Activated CD4-positive, alpha-beta T cell treated with anti-CD3 and anti-CD28 coated beads for 36 hours (primary cell): ENCODE measurements at regions of chr12 and their contacts with region 1.

Region 1: DNA sequence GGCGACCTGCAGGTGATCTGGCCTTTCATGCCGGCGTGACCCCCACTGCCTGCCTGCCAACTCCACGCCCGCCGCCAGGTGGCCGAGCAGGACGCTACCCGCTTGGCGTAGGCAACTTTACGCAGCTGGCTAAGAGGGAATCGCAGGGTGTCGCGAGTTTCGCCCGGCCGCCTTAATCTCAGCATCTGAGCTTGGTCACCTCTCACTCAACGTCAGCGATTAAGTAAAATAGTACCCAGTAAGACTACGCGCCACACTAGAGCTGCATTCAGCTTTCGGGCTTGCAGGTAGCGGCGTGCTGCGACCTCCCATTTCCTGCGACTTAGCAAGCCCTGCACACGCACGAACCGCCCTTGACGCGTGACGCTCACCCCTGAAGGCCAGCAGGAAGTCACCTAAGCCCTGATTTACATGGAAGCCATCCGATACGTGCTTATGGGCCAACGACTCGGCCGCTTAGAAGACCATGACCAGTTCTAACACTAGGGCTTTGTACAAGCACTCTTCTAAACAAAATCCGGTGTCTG is 33.2 kb downstream of the WBP11 start:
- DNase-seq: peak; percentile 94
- ATAC-seq: peak; percentile 45
- H3K4me3 Mint-ChIP-seq: peak overlapping the region; percentile 97
- H3K27ac Mint-ChIP-seq: peak overlapping the region; percentile 99
- H3K4me1 Mint-ChIP-seq: peaks cover 35% of the 10 kb centered on the region
- H3K27me3 Mint-ChIP-seq: no peaks in the 10 kb centered on the region

Region 2: GRCh38 chr12:12999959-13000615 is 1769.9 kb before region 1 on chr12 and contains the start of gene HEBP1:
- CTCF ChIA-PET with region 1: no interaction called
- POLR2A ChIA-PET with region 1: no interaction called
- intact Hi-C with region 1: loop called in 1 of 2 experiments (anchors 5 kb)
- DNase-seq: peak; percentile 99
- ATAC-seq: peak; percentile 92
- H3K4me3 Mint-ChIP-seq: peak within 1 kb of the TSS; percentile 86
- H3K27ac Mint-ChIP-seq: peak within 1 kb of the TSS; percentile 75
- H3K4me1 Mint-ChIP-seq: peaks cover 28% of the 10 kb centered on the region
- H3K27me3 Mint-ChIP-seq: peaks cover 6% of the 10 kb centered on the region
- total RNA-seq, gene HEBP1: 23.5 to 28.6 TPM

Region 3: GRCh38 chr12:14365294-14366208 is 404.5 kb before region 1 on chr12 and contains the start of gene ATF7IP:
- CTCF ChIA-PET with region 1: interaction called, 3 read pairs
- POLR2A ChIA-PET with region 1: interaction called, 8 read pairs
- intact Hi-C with region 1: loop called (anchors 1 to 5 kb)
- DNase-seq: peak; percentile 97
- ATAC-seq: peak; percentile 85
- H3K4me3 Mint-ChIP-seq: peak within 1 kb of the TSS; percentile 76
- H3K27ac Mint-ChIP-seq: peak within 1 kb of the TSS; percentile 98
- H3K4me1 Mint-ChIP-seq: peaks cover 33% of the 10 kb centered on the region
- H3K27me3 Mint-ChIP-seq: no peaks in the 10 kb centered on the region
- total RNA-seq, gene ATF7IP: 81.3 to 101 TPM

Region 4: GRCh38 chr12:14723763-14724162 is 46.3 kb before region 1 on chr12:
- CTCF ChIA-PET with region 1: interaction called, 6 read pairs
- POLR2A ChIA-PET with region 1: no interaction called
- intact Hi-C with region 1: loop called in 1 of 2 experiments (anchors 5 kb)
- DNase-seq: peak; percentile 72
- ATAC-seq: peak; percentile 80
- H3K4me3 Mint-ChIP-seq: no peak overlapping the region
- H3K27ac Mint-ChIP-seq: no peak overlapping the region
- H3K4me1 Mint-ChIP-seq: no peaks in the 10 kb centered on the region
- H3K27me3 Mint-ChIP-seq: peaks cover 5% of the 10 kb centered on the region

Region 5: GRCh38 chr12:14824012-14824634 is 54.1 kb after region 1 on chr12:
- CTCF ChIA-PET with region 1: interaction called, 3 read pairs
- POLR2A ChIA-PET with region 1: no interaction called
- intact Hi-C with region 1: loop called in 1 of 2 experiments (anchors 2 kb)
- DNase-seq: no peak
- ATAC-seq: peak; percentile 90
- H3K4me3 Mint-ChIP-seq: no peak overlapping the region
- H3K27ac Mint-ChIP-seq: no peak overlapping the region
- H3K4me1 Mint-ChIP-seq: peaks cover 23% of the 10 kb centered on the region
- H3K27me3 Mint-ChIP-seq: no peaks in the 10 kb centered on the region

Region 6: GRCh38 chr12:14960548-14961465 is 190.8 kb after region 1 on chr12:
- CTCF ChIA-PET with region 1: interaction called, 3 read pairs
- POLR2A ChIA-PET with region 1: interaction called, 6 read pairs
- intact Hi-C with region 1: loop called (anchors 1 kb)
- DNase-seq: peak; percentile 56
- ATAC-seq: peak; percentile 53
- H3K4me3 Mint-ChIP-seq: peak overlapping the region; percentile 96
- H3K27ac Mint-ChIP-seq: peak overlapping the region; percentile 99
- H3K4me1 Mint-ChIP-seq: peaks cover 55% of the 10 kb centered on the region
- H3K27me3 Mint-ChIP-seq: no peaks in the 10 kb centered on the region

Region 7: DNA sequence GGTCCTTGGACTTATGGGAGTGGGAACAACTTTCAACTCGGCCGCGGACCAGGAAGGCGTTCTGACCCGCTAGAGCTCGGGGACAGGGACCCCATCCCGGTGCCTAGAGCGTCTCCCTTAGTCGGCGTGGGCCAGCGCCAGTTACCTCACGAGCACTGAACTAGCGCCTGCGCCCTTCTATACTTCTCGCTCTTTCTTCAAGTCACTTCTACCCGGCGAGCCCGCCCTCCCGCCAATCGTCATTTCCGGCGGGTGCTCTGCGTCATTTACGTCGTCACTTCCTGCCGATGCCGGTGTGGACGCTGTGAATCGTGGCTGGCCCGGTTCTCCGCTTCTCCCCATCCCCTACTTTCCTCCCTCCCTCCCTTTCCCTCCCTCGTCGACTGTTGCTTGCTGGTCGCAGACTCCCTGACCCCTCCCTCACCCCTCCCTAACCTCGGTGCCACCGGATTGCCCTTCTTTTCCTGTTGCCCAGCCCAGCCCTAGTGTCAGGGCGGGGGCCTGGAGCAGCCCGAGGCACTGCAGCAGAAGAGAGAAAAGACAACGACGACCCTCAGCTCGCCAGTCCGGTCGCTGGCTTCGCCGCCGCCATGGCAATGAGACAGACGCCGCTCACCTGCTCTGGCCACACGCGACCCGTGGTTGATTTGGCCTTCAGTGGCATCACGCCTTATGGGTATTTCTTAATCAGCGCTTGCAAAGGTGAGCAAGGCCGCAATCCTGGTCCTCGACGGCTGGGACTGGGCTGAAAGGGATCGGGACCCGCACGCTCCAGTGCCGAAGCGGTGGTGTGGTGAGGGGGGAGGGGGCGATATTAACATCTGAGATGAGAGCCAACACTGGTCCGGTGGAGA is 1112.3 kb after region 1 on chr12 and contains the start of gene STRAP:
- CTCF ChIA-PET with region 1: no interaction called
- POLR2A ChIA-PET with region 1: no interaction called
- intact Hi-C with region 1: loop called (anchors 5 to 10 kb)
- DNase-seq: peak; percentile 97
- ATAC-seq: peak; percentile 98
- H3K4me3 Mint-ChIP-seq: peak within 1 kb of the TSS; percentile 95
- H3K27ac Mint-ChIP-seq: peak within 1 kb of the TSS; percentile 98
- H3K4me1 Mint-ChIP-seq: peaks cover 42% of the 10 kb centered on the region
- H3K27me3 Mint-ChIP-seq: no peaks in the 10 kb centered on the region
- total RNA-seq, gene STRAP: 133 to 139 TPM